AG04450 (cell line): ENCODE measurements at regions of chr15 and their contacts with region 1.

Region 1: GRCh38 chr15:89874926-89875564 is 18.7 kb downstream of the AP3S2 start:
- DNase-seq: no peak
- H3K4me3 ChIP-seq: no peak overlapping the region
- H3K27ac ChIP-seq: no peak overlapping the region
- H3K27me3 ChIP-seq: no peaks in the 10 kb centered on the region
- CTCF ChIP-seq: peak; percentile 98

Region 2: GRCh38 chr15:89728254-89728653 is 146.8 kb before region 1 on chr15:
- CTCF ChIA-PET with region 1: interaction called, 11 read pairs
- POLR2A ChIA-PET with region 1: no interaction called
- DNase-seq: no peak
- H3K4me3 ChIP-seq: no peak overlapping the region
- H3K27ac ChIP-seq: no peak overlapping the region
- H3K27me3 ChIP-seq: peaks cover 36% of the 10 kb centered on the region
- CTCF ChIP-seq: no peak

Region 3: GRCh38 chr15:89750560-89751542 is 124.2 kb before region 1 on chr15 and contains the start of gene MESP1:
- CTCF ChIA-PET with region 1: interaction called, 498 read pairs
- POLR2A ChIA-PET with region 1: no interaction called
- DNase-seq: peak; percentile 67
- H3K4me3 ChIP-seq: peak within 1 kb of the TSS; percentile 59
- H3K27ac ChIP-seq: no peak within 1 kb of the TSS
- H3K27me3 ChIP-seq: peaks cover 33% of the 10 kb centered on the region
- CTCF ChIP-seq: peak; percentile 70
- polyA plus RNA-seq, gene MESP1: 0.17 and 0.30 TPM in 2 replicates

Region 4: GRCh38 chr15:89776274-89777072 is 98.6 kb before region 1 on chr15 and contains the start of gene MESP2:
- CTCF ChIA-PET with region 1: interaction called, 29 read pairs
- POLR2A ChIA-PET with region 1: no interaction called
- DNase-seq: no peak
- H3K4me3 ChIP-seq: peak within 1 kb of the TSS; percentile 57
- H3K27ac ChIP-seq: no peak within 1 kb of the TSS
- H3K27me3 ChIP-seq: no peaks in the 10 kb centered on the region
- CTCF ChIP-seq: peak; percentile 44
- polyA plus RNA-seq, gene MESP2: 0.20 and 0.22 TPM in 2 replicates

Region 5: DNA sequence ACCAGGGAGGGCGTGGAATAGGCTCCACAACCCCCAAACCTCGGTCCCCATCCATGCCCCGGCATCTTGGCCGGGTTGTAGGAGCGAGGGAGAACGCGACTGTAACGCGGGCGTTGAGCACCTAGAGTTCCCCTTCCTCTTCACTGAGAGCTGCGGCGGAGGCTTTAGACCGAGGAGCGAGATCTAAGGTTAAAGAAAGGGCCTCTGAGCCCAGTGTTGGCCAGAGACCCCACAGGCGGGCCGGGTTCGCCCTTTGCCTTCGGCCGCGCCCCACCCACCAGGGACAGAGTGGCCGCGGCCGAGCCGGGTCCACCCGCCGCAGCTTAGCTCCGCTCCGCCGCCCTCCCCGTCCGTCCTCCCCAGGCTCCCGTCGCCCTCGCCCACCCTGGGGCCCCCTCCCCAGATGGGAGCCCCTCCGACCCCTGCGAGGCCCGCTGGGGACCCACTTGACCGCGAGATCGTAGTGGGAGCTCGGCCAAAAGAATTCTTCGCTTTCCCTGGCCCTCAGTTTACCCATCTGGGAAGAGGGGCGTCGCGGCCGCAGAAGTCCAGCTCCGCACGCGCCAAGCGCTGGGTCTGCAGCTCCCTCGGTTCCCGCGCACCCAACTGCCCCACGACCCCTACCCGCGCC is 60.8 kb before region 1 on chr15:
- CTCF ChIA-PET with region 1: interaction called, 14 read pairs
- POLR2A ChIA-PET with region 1: interaction called, 3 read pairs
- DNase-seq: no peak
- H3K4me3 ChIP-seq: peak overlapping the region; percentile 74
- H3K27ac ChIP-seq: no peak overlapping the region
- H3K27me3 ChIP-seq: no peaks in the 10 kb centered on the region
- CTCF ChIP-seq: no peak

Region 6: DNA sequence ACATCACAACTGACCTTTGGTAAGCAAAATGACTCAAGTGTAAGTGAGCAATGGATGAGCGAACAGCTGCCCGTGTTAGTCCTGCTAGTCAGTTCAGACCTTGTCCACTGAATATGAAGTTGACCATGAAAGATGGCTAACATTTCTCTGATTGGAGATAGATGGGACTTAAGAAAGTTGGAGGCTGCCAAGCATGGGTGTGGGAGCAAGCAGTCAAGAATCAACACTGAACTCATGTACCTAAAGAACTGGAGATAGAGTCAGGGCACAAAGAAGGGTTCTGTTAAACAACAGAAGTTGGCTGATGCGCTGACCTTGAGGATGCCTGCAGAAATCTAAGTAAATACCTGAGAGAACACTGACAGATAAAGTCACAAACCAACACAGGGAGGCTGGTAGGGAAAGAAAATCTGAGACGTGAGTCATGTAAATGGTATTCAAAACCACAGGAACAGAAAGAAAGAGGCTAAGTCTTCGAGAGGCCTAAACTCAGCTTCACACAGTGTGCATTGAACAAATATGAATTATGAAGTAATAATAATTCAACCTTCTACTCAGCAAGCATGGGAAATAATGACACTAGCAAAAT is 29.6 kb before region 1 on chr15:
- CTCF ChIA-PET with region 1: interaction called, 32 read pairs
- POLR2A ChIA-PET with region 1: no interaction called
- DNase-seq: peak; percentile 69
- H3K4me3 ChIP-seq: no peak overlapping the region
- H3K27ac ChIP-seq: peak overlapping the region; percentile 90
- H3K27me3 ChIP-seq: no peaks in the 10 kb centered on the region
- CTCF ChIP-seq: no peak

Region 7: DNA sequence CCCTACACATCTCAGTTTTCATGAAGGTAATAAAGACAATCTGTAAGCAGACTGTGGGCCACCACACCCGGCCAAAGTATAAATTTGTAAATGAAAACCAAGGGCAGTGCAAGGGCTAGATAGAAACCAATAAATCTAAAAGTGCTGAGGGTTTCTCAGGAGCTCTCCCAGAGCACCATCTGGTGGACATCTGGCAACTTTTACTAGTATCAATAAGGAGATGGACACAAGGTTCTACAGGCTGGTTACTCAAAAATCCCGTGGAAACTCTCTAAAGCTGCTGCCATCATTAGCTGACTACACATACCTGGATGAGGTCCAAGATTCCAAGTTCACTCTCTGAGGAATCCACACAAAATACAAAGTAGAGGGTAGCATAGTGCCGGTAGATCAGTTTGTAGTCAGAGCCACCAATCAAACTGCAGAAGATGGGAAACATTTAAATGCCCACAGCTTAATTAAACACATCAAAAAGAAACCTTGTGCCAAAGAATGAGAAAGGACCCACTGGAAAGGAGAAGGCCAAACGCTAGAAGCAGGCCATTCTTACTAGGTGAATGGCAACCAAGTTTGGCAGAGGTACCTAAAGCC is 13.3 kb after region 1 on chr15:
- CTCF ChIA-PET with region 1: interaction called, 161 read pairs
- POLR2A ChIA-PET with region 1: interaction called, 5 read pairs
- DNase-seq: peak; percentile 74
- H3K4me3 ChIP-seq: no peak overlapping the region
- H3K27ac ChIP-seq: no peak overlapping the region
- H3K27me3 ChIP-seq: no peaks in the 10 kb centered on the region
- CTCF ChIP-seq: peak; percentile 66